ENCODE measurements at regions of chr6 and their contacts with region 1.

Region 1: GRCh38 chr6:14316635-14317386 is 199.2 kb downstream of the CD83 start:
- DNase-seq: peak; percentile 12
- H3K4me3 Mint-ChIP-seq: no peak overlapping the region
- H3K27ac Mint-ChIP-seq: no peak overlapping the region
- H3K4me1 Mint-ChIP-seq: peaks cover 19% of the 10 kb centered on the region
- H3K27me3 Mint-ChIP-seq: no peaks in the 10 kb centered on the region

Region 2: DNA sequence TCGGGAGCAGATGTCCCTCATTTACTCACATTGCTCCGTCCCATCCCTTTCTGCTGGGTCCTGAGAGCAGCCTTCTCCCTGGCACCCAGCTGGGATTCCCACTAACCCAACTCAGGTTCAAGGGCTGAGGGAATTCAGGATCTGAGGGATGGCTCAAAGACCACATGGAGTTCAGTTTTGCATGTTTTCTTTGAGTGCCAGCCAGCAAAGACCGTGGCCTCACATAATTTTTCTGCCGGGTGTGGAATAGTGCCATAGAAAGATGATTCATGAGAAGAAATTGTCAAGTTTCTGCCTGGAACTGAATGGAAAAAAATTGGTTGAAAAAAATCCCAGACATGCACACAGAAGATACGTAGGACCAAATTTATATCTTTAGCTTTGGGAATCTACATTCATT is 30.7 kb before region 1 on chr6:
- CTCF ChIA-PET with region 1: no interaction called
- POLR2A ChIA-PET with region 1: no interaction called
- DNase-seq: no peak
- H3K4me3 Mint-ChIP-seq: no peak overlapping the region
- H3K27ac Mint-ChIP-seq: no peak overlapping the region
- H3K4me1 Mint-ChIP-seq: peaks cover 19% of the 10 kb centered on the region
- H3K27me3 Mint-ChIP-seq: no peaks in the 10 kb centered on the region

Region 3: GRCh38 chr6:14451594-14452374 is 135.0 kb after region 1 on chr6:
- CTCF ChIA-PET with region 1: no interaction called
- POLR2A ChIA-PET with region 1: interaction called, 10 read pairs
- DNase-seq: no peak
- H3K4me3 Mint-ChIP-seq: no peak overlapping the region
- H3K27ac Mint-ChIP-seq: peak overlapping the region; percentile 79
- H3K4me1 Mint-ChIP-seq: peaks cover 85% of the 10 kb centered on the region
- H3K27me3 Mint-ChIP-seq: no peaks in the 10 kb centered on the region